ENCODE measurements at regions of chr14 and their contacts with region 1.

Region 1: GRCh38 chr14:103628684-103629502 is at the start of gene KLC1:
- DNase-seq: peak; percentile 79
- H3K4me3 ChIP-seq: peak within 1 kb of the TSS; percentile 90
- H3K27ac ChIP-seq: peak within 1 kb of the TSS; percentile 57
- H3K4me1 ChIP-seq: peaks cover 53% of the 10 kb centered on the region
- CTCF ChIP-seq: no peak
- total RNA-seq, gene KLC1: 157 and 204 TPM in 2 replicates

Region 2: GRCh38 chr14:102139248-102140026 is 1489.5 kb before region 1 on chr14 and contains the start of gene WDR20:
- CTCF ChIA-PET with region 1: no interaction called
- POLR2A ChIA-PET with region 1: no interaction called
- intact Hi-C with region 1: loop called (anchors 5 kb)
- DNase-seq: peak; percentile 99
- H3K4me3 ChIP-seq: peak within 1 kb of the TSS; percentile 93
- H3K27ac ChIP-seq: peak within 1 kb of the TSS; percentile 56
- H3K4me1 ChIP-seq: peaks cover 19% of the 10 kb centered on the region
- CTCF ChIP-seq: peak; percentile 57
- total RNA-seq, gene WDR20: 13.3 and 18.0 TPM in 2 replicates

Region 3: GRCh38 chr14:103594265-103594664 is 34.6 kb before region 1 on chr14:
- CTCF ChIA-PET with region 1: no interaction called
- POLR2A ChIA-PET with region 1: no interaction called
- intact Hi-C with region 1: loop called (anchors 2 kb)
- DNase-seq: no peak
- H3K4me3 ChIP-seq: peak overlapping the region; percentile 14
- H3K27ac ChIP-seq: peak overlapping the region; percentile 73
- H3K4me1 ChIP-seq: peaks cover 40% of the 10 kb centered on the region
- CTCF ChIP-seq: no peak

Region 4: GRCh38 chr14:103730490-103731035 is 101.7 kb after region 1 on chr14:
- CTCF ChIA-PET with region 1: no interaction called
- POLR2A ChIA-PET with region 1: no interaction called
- intact Hi-C with region 1: no loop called
- DNase-seq: no peak
- H3K4me3 ChIP-seq: no peak overlapping the region
- H3K27ac ChIP-seq: no peak overlapping the region
- H3K4me1 ChIP-seq: no peaks in the 10 kb centered on the region
- CTCF ChIP-seq: no peak